ENCODE measurements at regions of chr5 and their contacts with region 1.

Region 1: GRCh38 chr5:148443998-148444397 is 60.2 kb downstream of the FBXO38 start:
- DNase-seq: peak in 3 of 5 donors; percentile 28 to 65 (median 45)
- ATAC-seq: peak; percentile 68 to 83 (median 82)
- H3K4me3 ChIP-seq: no peak overlapping the region
- H3K27ac ChIP-seq: peak overlapping the region in 2 of 12 donors; percentile 6 to 24
- H3K4me1 ChIP-seq: peaks cover 0 to 28% (median 5%) of the 10 kb centered on the region in 12 donors
- H3K27me3 ChIP-seq: no peaks in the 10 kb centered on the region
- CTCF ChIP-seq: peak; percentile 63 to 86 (median 77)
- POLR2A ChIP-seq: no peak

Region 2: GRCh38 chr5:148135091-148136048 is 308.6 kb before region 1 on chr5:
- intact Hi-C with region 1: no loop called
- DNase-seq: no peak
- ATAC-seq: no peak
- H3K4me3 ChIP-seq: no peak overlapping the region
- H3K27ac ChIP-seq: no peak overlapping the region
- H3K4me1 ChIP-seq: no peaks in the 10 kb centered on the region
- H3K27me3 ChIP-seq: no peaks in the 10 kb centered on the region
- CTCF ChIP-seq: no peak
- POLR2A ChIP-seq: no peak

Region 3: GRCh38 chr5:148179234-148179824 is 264.7 kb before region 1 on chr5:
- intact Hi-C with region 1: loop called in 4 of 10 experiments (anchors 5 to 10 kb)
- DNase-seq: peak in 1 of 5 donors; percentile 6
- ATAC-seq: peak in 3 of 4 donors; percentile 49 to 75 (median 70)
- H3K4me3 ChIP-seq: no peak overlapping the region
- H3K27ac ChIP-seq: no peak overlapping the region
- H3K4me1 ChIP-seq: peaks cover 0 to 5% (median 0%) of the 10 kb centered on the region in 12 donors
- H3K27me3 ChIP-seq: no peaks in the 10 kb centered on the region
- CTCF ChIP-seq: peak; percentile 51 to 88 (median 74)
- POLR2A ChIP-seq: no peak

Region 4: GRCh38 chr5:148408092-148408491 is 35.9 kb before region 1 on chr5:
- intact Hi-C with region 1: loop called in 1 of 10 experiments (anchors 5 kb)
- DNase-seq: no peak
- ATAC-seq: no peak
- H3K4me3 ChIP-seq: no peak overlapping the region
- H3K27ac ChIP-seq: peak overlapping the region in 2 of 12 donors; percentile 16 to 66
- H3K4me1 ChIP-seq: peaks cover 0 to 20% (median 5%) of the 10 kb centered on the region in 12 donors
- H3K27me3 ChIP-seq: no peaks in the 10 kb centered on the region
- CTCF ChIP-seq: no peak
- POLR2A ChIP-seq: no peak

Region 5: GRCh38 chr5:148719605-148720004 is 275.6 kb after region 1 on chr5:
- intact Hi-C with region 1: loop called in 1 of 10 experiments (anchors 5 kb)
- DNase-seq: no peak
- ATAC-seq: no peak
- H3K4me3 ChIP-seq: no peak overlapping the region
- H3K27ac ChIP-seq: no peak overlapping the region
- H3K4me1 ChIP-seq: peaks cover 0 to 6% (median 0%) of the 10 kb centered on the region in 12 donors
- H3K27me3 ChIP-seq: no peaks in the 10 kb centered on the region
- CTCF ChIP-seq: no peak
- POLR2A ChIP-seq: no peak

Region 6: GRCh38 chr5:149128023-149128875 is 684.3 kb after region 1 on chr5:
- intact Hi-C with region 1: loop called in 1 of 10 experiments (anchors 10 kb)
- DNase-seq: peak in 1 of 5 donors; percentile 42
- ATAC-seq: peak in 3 of 4 donors; percentile 53 to 79 (median 68)
- H3K4me3 ChIP-seq: no peak overlapping the region
- H3K27ac ChIP-seq: no peak overlapping the region
- H3K4me1 ChIP-seq: peaks cover 0 to 14% (median 8%) of the 10 kb centered on the region in 12 donors
- H3K27me3 ChIP-seq: no peaks in the 10 kb centered on the region
- CTCF ChIP-seq: peak; percentile 47 to 80 (median 63)
- POLR2A ChIP-seq: no peak

Measured in heart left ventricle (tissue), 16 donors.